ENCODE measurements at regions of chr1 and their contacts with region 1.

Region 1: GRCh38 chr1:22052115-22053016 is at the start of gene CDC42:
- DNase-seq: peak; percentile 99
- H3K4me3 Mint-ChIP-seq: peak within 1 kb of the TSS; percentile 98
- H3K27ac Mint-ChIP-seq: peak within 1 kb of the TSS; percentile 98
- H3K4me1 Mint-ChIP-seq: peaks cover 54% of the 10 kb centered on the region
- H3K27me3 Mint-ChIP-seq: no peaks in the 10 kb centered on the region
- total RNA-seq, gene CDC42: 307 and 321 TPM in 2 replicates

Region 2: DNA sequence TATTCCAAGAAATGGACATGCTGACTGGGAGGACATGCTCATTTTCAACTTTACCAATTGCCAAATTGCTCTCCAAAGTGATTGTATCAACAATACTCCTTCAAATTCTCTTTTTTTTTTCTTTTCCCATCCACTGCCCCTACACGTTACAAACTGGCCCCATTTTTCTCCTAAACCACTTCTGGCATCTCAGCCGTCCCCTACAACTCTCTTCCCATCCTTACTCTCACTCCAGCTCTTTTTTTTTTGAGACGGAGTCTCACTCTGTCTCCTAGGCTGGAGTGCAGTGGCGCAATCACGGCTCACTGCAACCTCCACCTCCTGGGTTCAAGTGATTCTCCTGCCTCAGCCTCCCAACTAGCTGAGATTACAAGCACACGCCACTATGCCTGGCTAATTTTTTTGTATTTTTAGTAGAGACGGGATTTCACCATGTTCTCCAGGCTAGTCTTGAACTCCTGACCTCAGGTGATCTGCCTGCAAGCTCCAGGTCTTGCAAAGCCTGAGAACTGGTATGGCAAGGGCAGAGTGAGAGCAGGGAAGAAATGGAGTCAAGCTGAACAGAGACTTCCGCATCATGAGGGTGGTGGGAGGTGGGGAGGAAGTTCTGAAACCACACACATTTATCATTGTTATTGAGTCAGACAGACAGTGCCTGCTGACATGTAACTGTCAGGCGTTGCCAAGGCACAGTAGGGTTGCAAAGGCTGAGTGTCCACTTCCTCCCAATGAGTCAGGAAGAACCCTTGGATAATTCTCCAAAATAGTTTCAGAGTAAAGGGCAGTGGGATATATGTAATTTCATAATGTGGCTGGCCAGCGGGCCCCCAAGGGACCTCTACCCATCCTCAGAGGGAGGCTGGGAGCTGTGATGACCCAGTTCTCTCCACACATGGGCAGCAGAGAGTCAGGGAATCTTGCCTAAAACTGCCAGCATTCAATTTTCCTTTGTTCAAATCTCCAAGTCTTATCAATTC is 33.5 kb before region 1 on chr1:
- intact Hi-C with region 1: loop called (anchors 1 kb)
- DNase-seq: peak; percentile 92
- H3K4me3 Mint-ChIP-seq: peak overlapping the region; percentile 41
- H3K27ac Mint-ChIP-seq: peak overlapping the region; percentile 96
- H3K4me1 Mint-ChIP-seq: peaks cover 22% of the 10 kb centered on the region
- H3K27me3 Mint-ChIP-seq: no peaks in the 10 kb centered on the region

Region 3: DNA sequence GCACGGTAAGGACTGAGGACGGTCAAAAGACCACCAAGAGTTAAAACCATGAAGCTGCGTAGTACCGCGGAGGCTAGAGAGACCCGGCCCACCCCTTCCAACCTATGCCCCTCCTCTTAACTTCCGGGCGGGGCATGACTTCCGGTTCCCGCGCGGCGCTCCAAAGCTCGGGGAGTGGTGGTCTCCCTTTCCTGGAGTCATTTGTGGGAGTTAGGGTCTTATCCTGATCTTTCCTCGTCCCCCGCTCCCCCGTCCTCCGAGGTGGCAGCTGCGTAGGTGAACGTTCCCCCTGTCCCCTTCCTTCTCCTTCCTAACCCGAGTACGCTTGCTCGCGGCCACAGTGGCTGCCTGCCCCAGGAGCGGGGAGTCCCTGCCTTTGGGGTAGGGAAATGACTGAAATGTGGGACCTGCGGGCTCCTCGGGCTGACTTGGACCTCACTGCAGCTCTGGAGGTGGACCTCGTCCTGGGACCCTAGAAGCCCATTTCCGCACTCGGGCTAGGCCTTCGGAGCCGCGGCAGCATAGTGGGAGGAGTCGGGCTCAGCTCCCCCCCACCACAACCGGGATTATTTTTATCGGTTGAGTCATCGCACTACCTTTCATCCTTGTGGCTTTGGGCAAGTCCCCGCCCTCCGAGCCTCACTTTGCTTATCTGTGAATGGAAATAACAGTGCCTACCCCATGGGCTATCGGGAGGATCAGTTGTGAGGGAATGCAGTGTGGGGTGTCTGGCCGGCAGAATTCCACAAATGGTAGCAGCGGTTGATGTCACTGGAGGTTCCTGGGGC is 26.8 kb before region 1 on chr1:
- intact Hi-C with region 1: loop called (anchors 1 kb)
- DNase-seq: peak; percentile 97
- H3K4me3 Mint-ChIP-seq: peak overlapping the region; percentile 90
- H3K27ac Mint-ChIP-seq: peak overlapping the region; percentile 100
- H3K4me1 Mint-ChIP-seq: peaks cover 48% of the 10 kb centered on the region
- H3K27me3 Mint-ChIP-seq: no peaks in the 10 kb centered on the region

Region 4: GRCh38 chr1:22039594-22040285 is 12.6 kb before region 1 on chr1:
- intact Hi-C with region 1: loop called (anchors 1 kb)
- DNase-seq: peak; percentile 98
- H3K4me3 Mint-ChIP-seq: peak overlapping the region; percentile 80
- H3K27ac Mint-ChIP-seq: peak overlapping the region; percentile 98
- H3K4me1 Mint-ChIP-seq: peaks cover 42% of the 10 kb centered on the region
- H3K27me3 Mint-ChIP-seq: no peaks in the 10 kb centered on the region

Region 5: DNA sequence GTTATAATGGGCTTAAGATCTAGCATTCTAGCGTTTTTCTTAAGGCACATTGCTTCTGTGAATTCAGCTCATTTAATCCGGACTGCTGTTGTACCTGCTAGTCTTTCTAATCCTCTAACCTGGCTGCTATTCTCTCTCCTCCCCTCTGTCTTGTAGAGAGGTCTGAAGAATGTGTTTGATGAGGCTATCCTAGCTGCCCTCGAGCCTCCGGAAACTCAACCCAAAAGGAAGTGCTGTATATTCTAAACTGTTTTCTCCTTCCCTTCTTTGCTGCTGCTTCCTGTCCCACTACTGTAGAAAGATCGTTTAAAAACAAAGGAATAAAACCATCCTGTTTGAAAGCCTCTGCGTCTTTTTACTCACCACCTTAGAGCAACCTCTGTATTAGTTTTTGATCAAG is 37.4 kb after region 1 on chr1:
- intact Hi-C with region 1: loop called (anchors 2 kb)
- DNase-seq: peak; percentile 76
- H3K4me3 Mint-ChIP-seq: peak overlapping the region; percentile 82
- H3K27ac Mint-ChIP-seq: peak overlapping the region; percentile 87
- H3K4me1 Mint-ChIP-seq: peaks cover 70% of the 10 kb centered on the region
- H3K27me3 Mint-ChIP-seq: no peaks in the 10 kb centered on the region

Region 6: DNA sequence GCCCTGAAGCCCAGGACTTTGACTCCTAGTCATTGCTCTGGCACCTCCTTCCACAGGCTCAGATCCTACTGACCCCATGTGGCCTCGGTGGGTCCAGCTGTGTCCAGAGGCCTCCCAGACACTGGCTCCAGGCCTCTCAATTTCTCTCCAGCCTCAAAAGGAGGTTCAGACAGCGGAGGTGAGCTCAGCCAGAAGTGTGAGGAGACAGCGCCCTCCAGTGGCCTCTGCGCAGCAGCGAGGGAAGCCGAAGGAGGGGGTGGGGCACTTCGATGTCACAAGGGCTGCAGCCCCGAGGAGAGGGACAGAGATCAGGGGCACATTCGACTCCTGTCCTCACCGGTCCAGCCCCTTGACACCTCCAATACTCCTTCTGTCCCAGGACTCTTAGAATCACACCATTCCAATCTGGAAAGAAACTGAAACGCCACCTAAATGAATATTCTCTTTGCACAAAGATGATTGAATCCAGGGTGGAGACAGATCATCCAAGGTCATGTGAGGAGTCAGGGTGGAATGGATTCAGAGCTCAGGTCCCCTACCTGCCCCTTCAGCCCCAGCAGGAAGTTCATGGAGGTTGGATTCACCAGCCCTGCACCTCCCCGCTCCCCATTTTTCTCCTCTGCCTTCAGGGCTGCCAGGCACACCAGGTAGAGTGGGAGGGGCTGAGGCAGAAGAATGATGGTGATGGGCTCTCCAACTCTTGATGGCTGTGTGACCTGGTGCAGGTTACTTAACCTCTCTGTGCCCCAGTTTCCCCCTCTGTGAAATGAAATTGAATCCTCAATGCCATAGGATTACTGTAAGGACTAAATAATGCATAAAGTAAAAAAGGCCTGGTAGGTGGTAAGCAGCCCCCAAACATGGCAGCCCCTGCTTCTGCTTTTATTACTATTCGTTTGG is 364.4 kb after region 1 on chr1:
- intact Hi-C with region 1: no loop called
- DNase-seq: peak; percentile 92
- H3K4me3 Mint-ChIP-seq: no peak overlapping the region
- H3K27ac Mint-ChIP-seq: no peak overlapping the region
- H3K4me1 Mint-ChIP-seq: peaks cover 4% of the 10 kb centered on the region
- H3K27me3 Mint-ChIP-seq: peaks cover 34% of the 10 kb centered on the region

Measured in activated CD4-positive, alpha-beta T cell treated with anti-CD3 and anti-CD28 coated beads, Interleukin-2, amount 10 ng/mL, durations not matched to agents 24 days and 14 days (primary cell).